ENCODE measurements at regions of chrX and their contacts with region 1.

Region 1: GRCh38 chrX:153635788-153636622 is 11.0 kb upstream of the DUSP9 start:
- DNase-seq: peak in 1 of 5 donors; percentile 22
- ATAC-seq: peak in 1 of 4 donors; percentile 42
- H3K4me3 ChIP-seq: no peak overlapping the region
- H3K27ac ChIP-seq: no peak overlapping the region
- H3K4me1 ChIP-seq: peaks cover 0 to 6% (median 0%) of the 10 kb centered on the region in 12 donors
- H3K27me3 ChIP-seq: peaks cover 0 to 19% (median 0%) of the 10 kb centered on the region in 9 donors
- CTCF ChIP-seq: peak in 4 of 12 donors; percentile 8 to 20 (median 12)
- POLR2A ChIP-seq: no peak

Region 2: GRCh38 chrX:153580700-153581386 is 55.2 kb before region 1 on chrX:
- intact Hi-C with region 1: no loop called
- DNase-seq: no peak
- ATAC-seq: no peak
- H3K4me3 ChIP-seq: no peak overlapping the region
- H3K27ac ChIP-seq: no peak overlapping the region
- H3K4me1 ChIP-seq: no peaks in the 10 kb centered on the region
- H3K27me3 ChIP-seq: peaks cover 0 to 17% (median 0%) of the 10 kb centered on the region in 9 donors
- CTCF ChIP-seq: peak in 3 of 12 donors; percentile 5 to 24 (median 9)
- POLR2A ChIP-seq: no peak

Region 3: DNA sequence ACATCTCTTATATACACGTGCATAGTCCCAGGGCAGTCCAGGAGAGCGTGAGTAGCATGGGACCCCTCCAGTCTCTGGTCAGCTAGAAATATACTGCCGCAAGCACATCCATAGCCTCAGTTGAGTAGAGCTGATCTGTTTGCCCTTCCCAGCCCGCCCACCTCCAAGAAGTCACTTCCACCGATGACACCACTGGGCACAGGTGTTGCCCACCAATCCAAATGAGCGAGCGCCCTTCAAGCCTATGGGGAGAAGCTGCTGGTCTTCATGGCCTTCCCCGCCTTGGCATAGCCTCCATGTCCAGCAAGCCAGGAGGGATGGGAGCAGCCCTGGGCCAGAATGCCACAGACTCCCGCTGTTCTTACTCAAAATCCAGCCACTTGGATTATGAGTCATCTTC is 21.2 kb after region 1 on chrX:
- intact Hi-C with region 1: loop called in 1 of 10 experiments (anchors 2 kb)
- DNase-seq: peak in 1 of 5 donors; percentile 5
- ATAC-seq: no peak
- H3K4me3 ChIP-seq: no peak overlapping the region
- H3K27ac ChIP-seq: no peak overlapping the region
- H3K4me1 ChIP-seq: no peaks in the 10 kb centered on the region
- H3K27me3 ChIP-seq: peaks cover 0 to 41% (median 5%) of the 10 kb centered on the region in 9 donors
- CTCF ChIP-seq: no peak
- POLR2A ChIP-seq: no peak